Esophagus muscularis mucosa (tissue), 4 donors: ENCODE measurements at regions of chr4 and their contacts with region 1.

Region 1: GRCh38 chr4:5979976-5980375 is 38.3 kb downstream of the C4orf50 start:
- DNase-seq: no peak
- H3K4me3 ChIP-seq: no peak overlapping the region
- H3K27ac ChIP-seq: no peak overlapping the region
- H3K4me1 ChIP-seq: peaks cover 0 to 3% (median 0%) of the 10 kb centered on the region in 4 donors
- H3K27me3 ChIP-seq: peaks cover 0 to 60% (median 0%) of the 10 kb centered on the region in 4 donors
- CTCF ChIP-seq: peak in 1 of 3 experiments; percentile 27
- EP300 ChIP-seq: no peak
- POLR2A ChIP-seq: no peak

Region 2: GRCh38 chr4:5824635-5825034 is 155.3 kb before region 1 on chr4:
- intact Hi-C with region 1: loop called (anchors 10 kb)
- DNase-seq: no peak
- H3K4me3 ChIP-seq: no peak overlapping the region
- H3K27ac ChIP-seq: no peak overlapping the region
- H3K4me1 ChIP-seq: peaks cover 4 to 15% (median 10%) of the 10 kb centered on the region in 4 donors
- H3K27me3 ChIP-seq: no peaks in the 10 kb centered on the region
- CTCF ChIP-seq: peak in 1 of 3 experiments; percentile 40
- EP300 ChIP-seq: no peak
- POLR2A ChIP-seq: no peak

Region 3: GRCh38 chr4:6245246-6246169 is 265.5 kb after region 1 on chr4:
- intact Hi-C with region 1: no loop called
- DNase-seq: no peak
- H3K4me3 ChIP-seq: peak overlapping the region; percentile 37 to 54 (median 43)
- H3K27ac ChIP-seq: no peak overlapping the region
- H3K4me1 ChIP-seq: peaks cover 5 to 12% (median 8%) of the 10 kb centered on the region in 4 donors
- H3K27me3 ChIP-seq: peaks cover 0 to 81% (median 12%) of the 10 kb centered on the region in 4 donors
- CTCF ChIP-seq: no peak
- EP300 ChIP-seq: no peak
- POLR2A ChIP-seq: no peak